ENCODE measurements at regions of chr20 and their contacts with region 1.

Region 1: GRCh38 chr20:34516247-34517113 is at the start of gene DYNLRB1:
- DNase-seq: peak; percentile 68
- ATAC-seq: peak; percentile 91
- H3K4me3 ChIP-seq: peak within 1 kb of the TSS; percentile 82
- H3K27ac ChIP-seq: peak within 1 kb of the TSS; percentile 78
- H3K4me1 ChIP-seq: peaks cover 7% of the 10 kb centered on the region; the same call in 1 of the 2 replicates
- H3K27me3 ChIP-seq: no peaks in the 10 kb centered on the region
- CTCF ChIP-seq: no peak
- EP300 ChIP-seq: no peak
- POLR2A ChIP-seq: peak; percentile 90
- RAD21 ChIP-seq: no peak
- polyA plus RNA-seq, gene DYNLRB1: 185 to 189 TPM

Region 2: GRCh38 chr20:34302723-34303528 is 213.6 kb before region 1 on chr20 and contains the start of gene AHCY:
- CTCF ChIA-PET with region 1: interaction called, 4 read pairs
- POLR2A ChIA-PET with region 1: interaction called, 21 read pairs
- RAD21 ChIA-PET with region 1: interaction called, 5 read pairs
- SMC1A ChIA-PET with region 1: interaction called, 3 read pairs
- in situ Hi-C with region 1: no loop called
- intact Hi-C with region 1: no loop called
- DNase-seq: peak; percentile 82
- ATAC-seq: peak; percentile 96
- H3K4me3 ChIP-seq: peak within 1 kb of the TSS; percentile 95
- H3K27ac ChIP-seq: peak within 1 kb of the TSS; percentile 87
- H3K4me1 ChIP-seq: peaks cover 11% of the 10 kb centered on the region
- H3K27me3 ChIP-seq: no peaks in the 10 kb centered on the region
- CTCF ChIP-seq: 0 out of 6 replicates have a peak, but pooled peaks of 1 of the 3 experiments have one; percentile 5
- EP300 ChIP-seq: no peak
- POLR2A ChIP-seq: peak; percentile 90
- RAD21 ChIP-seq: no peak
- polyA plus RNA-seq, gene AHCY: 84.9 to 116 TPM

Region 3: GRCh38 chr20:34363062-34363464 is 153.4 kb before region 1 on chr20 and contains the start of gene ITCH:
- CTCF ChIA-PET with region 1: interaction called, 4 read pairs
- POLR2A ChIA-PET with region 1: interaction called, 4 read pairs
- RAD21 ChIA-PET with region 1: interaction called, 9 read pairs
- SMC1A ChIA-PET with region 1: interaction called, 5 read pairs
- in situ Hi-C with region 1: no loop called
- intact Hi-C with region 1: loop called (anchors 5 kb)
- DNase-seq: peak; percentile 56
- ATAC-seq: peak; percentile 98
- H3K4me3 ChIP-seq: peak within 1 kb of the TSS; percentile 99
- H3K27ac ChIP-seq: peak within 1 kb of the TSS; percentile 70
- H3K4me1 ChIP-seq: peaks cover 20% of the 10 kb centered on the region
- H3K27me3 ChIP-seq: no peaks in the 10 kb centered on the region
- CTCF ChIP-seq: no peak
- EP300 ChIP-seq: no peak
- POLR2A ChIP-seq: peak; percentile 92
- RAD21 ChIP-seq: no peak
- polyA plus RNA-seq, gene ITCH: 7.5 to 8.2 TPM

Region 4: GRCh38 chr20:34473262-34473883 is 43.1 kb before region 1 on chr20:
- CTCF ChIA-PET with region 1: interaction called, 4 read pairs
- POLR2A ChIA-PET with region 1: no interaction called
- RAD21 ChIA-PET with region 1: interaction called, 5 read pairs
- SMC1A ChIA-PET with region 1: interaction called, 5 read pairs
- in situ Hi-C with region 1: no loop called
- intact Hi-C with region 1: loop called (anchors 5 kb)
- DNase-seq: no peak
- ATAC-seq: peak; percentile 85
- H3K4me3 ChIP-seq: no peak overlapping the region
- H3K27ac ChIP-seq: no peak overlapping the region
- H3K4me1 ChIP-seq: peaks cover 8% of the 10 kb centered on the region
- H3K27me3 ChIP-seq: no peaks in the 10 kb centered on the region
- CTCF ChIP-seq: peak; percentile 34 to 50 (median 41); a peak in 5 of 6 replicates
- EP300 ChIP-seq: no peak
- POLR2A ChIP-seq: no peak
- RAD21 ChIP-seq: peak; percentile 70

Region 5: GRCh38 chr20:34538671-34539123 is 22.2 kb after region 1 on chr20:
- CTCF ChIA-PET with region 1: interaction called, 18 read pairs
- POLR2A ChIA-PET with region 1: no interaction called
- RAD21 ChIA-PET with region 1: interaction called, 5 read pairs
- SMC1A ChIA-PET with region 1: no interaction called
- in situ Hi-C with region 1: no loop called
- intact Hi-C with region 1: no loop called
- DNase-seq: no peak
- ATAC-seq: peak; percentile 85
- H3K4me3 ChIP-seq: no peak overlapping the region
- H3K27ac ChIP-seq: no peak overlapping the region
- H3K4me1 ChIP-seq: peaks cover 4% of the 10 kb centered on the region; the same call in 1 of the 2 replicates
- H3K27me3 ChIP-seq: no peaks in the 10 kb centered on the region
- CTCF ChIP-seq: peak; percentile 78 to 92 (median 88)
- EP300 ChIP-seq: no peak
- POLR2A ChIP-seq: no peak
- RAD21 ChIP-seq: peak; percentile 69

Region 6: GRCh38 chr20:34704177-34705007 is 187.9 kb after region 1 on chr20 and contains the start of gene TP53INP2:
- CTCF ChIA-PET with region 1: interaction called, 17 read pairs
- POLR2A ChIA-PET with region 1: interaction called, 4 read pairs
- RAD21 ChIA-PET with region 1: interaction called, 31 read pairs
- SMC1A ChIA-PET with region 1: interaction called, 18 read pairs
- in situ Hi-C with region 1: no loop called
- intact Hi-C with region 1: no loop called
- DNase-seq: no peak
- ATAC-seq: peak; percentile 66
- H3K4me3 ChIP-seq: peak within 1 kb of the TSS; percentile 96
- H3K27ac ChIP-seq: peak within 1 kb of the TSS; percentile 70
- H3K4me1 ChIP-seq: peaks cover 3% of the 10 kb centered on the region; the same call in 1 of the 2 replicates
- H3K27me3 ChIP-seq: no peaks in the 10 kb centered on the region
- CTCF ChIP-seq: no peak
- EP300 ChIP-seq: no peak
- POLR2A ChIP-seq: peak; percentile 66
- RAD21 ChIP-seq: no peak
- polyA plus RNA-seq, gene TP53INP2: 2.8 to 3.7 TPM

Region 7: DNA sequence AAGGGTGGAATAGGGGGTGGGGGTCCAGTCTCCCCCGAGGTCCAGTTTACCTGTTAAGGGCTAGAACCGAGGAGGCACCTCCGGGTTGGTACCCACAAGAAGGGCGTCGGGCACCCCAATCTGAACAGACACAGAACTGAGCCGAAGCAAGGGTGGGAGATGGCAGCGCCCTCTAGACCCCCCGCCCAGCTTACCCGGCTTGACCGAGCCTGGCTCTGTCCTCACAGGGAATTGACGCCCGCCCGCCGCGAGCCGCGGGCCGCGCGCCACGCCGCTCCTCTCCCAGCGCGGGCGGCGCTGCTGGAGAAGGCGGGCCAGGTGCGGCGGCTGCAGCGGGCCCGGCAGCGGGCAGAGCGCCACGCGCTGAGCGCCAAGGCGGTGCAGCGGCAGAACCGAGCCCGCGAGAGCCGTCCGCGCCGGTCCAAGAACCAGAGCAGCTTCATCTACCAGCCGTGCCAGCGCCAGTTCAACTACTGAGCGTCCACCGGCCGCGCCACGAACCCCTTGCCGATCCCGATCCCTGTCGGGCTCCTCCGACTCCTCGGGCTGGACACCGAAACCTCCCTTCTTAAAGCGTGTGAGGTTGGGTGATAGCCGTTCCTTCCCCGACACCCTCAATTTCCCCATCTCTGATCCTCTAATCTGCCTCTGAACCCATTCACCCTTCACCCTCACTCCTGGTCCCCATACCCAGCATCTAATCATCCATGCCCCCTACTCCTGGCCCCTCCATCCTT is 193.5 kb after region 1 on chr20:
- CTCF ChIA-PET with region 1: interaction called, 17 read pairs
- POLR2A ChIA-PET with region 1: interaction called, 4 read pairs
- RAD21 ChIA-PET with region 1: interaction called, 31 read pairs
- SMC1A ChIA-PET with region 1: interaction called, 18 read pairs
- in situ Hi-C with region 1: no loop called
- intact Hi-C with region 1: no loop called
- DNase-seq: no peak
- ATAC-seq: peak; percentile 51
- H3K4me3 ChIP-seq: peak overlapping the region; percentile 91
- H3K27ac ChIP-seq: peak overlapping the region; percentile 86
- H3K4me1 ChIP-seq: peaks cover 23% of the 10 kb centered on the region
- H3K27me3 ChIP-seq: no peaks in the 10 kb centered on the region
- CTCF ChIP-seq: peak; percentile 31 to 47 (median 41); a peak in 5 of 6 replicates
- EP300 ChIP-seq: no peak
- POLR2A ChIP-seq: no peak
- RAD21 ChIP-seq: no peak

Measured in GM12878 (cell line).